ENCODE measurements at regions of chr7 and their contacts with region 1.

Region 1: DNA sequence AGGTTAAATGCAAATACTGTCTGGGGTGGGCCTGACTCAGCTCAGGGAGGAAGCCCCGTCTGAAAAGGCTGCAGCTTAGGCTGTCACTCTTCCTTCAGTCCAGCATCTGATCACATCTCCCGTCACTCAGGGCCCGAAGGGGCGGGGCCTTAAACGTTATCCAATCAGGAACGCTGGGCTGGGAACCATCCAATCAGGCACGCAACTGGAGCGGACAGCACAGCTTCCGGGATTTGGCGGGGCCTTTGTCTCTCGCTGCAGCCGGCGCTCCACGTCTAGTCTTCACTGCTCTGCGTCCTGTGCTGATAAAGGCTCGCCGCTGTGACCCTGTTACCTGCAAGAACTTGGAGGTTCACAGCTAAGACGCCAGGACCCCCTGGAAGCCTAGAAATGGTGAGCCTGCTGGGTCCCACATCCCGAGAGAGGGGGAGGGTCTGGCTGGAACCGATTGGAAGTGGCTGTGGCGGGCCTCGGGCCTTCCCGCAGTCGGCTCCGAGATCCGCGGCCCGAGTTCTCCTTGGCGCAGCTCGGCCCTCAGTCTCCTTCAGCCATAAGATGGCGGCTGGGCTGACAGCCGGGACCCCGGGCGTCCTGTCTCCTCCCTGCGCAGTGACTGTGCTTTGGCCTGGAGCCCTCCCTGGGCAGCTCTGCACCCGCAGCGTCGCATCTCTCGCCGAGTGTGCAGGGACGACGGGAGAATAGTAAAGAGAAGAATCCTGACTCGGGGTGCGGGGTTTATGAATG is at the start of gene ZNF92:
- DNase-seq: peak; percentile 91
- ATAC-seq: peak; percentile 97
- H3K4me3 Mint-ChIP-seq: peak within 1 kb of the TSS; percentile 96
- H3K27ac Mint-ChIP-seq: peak within 1 kb of the TSS; percentile 91
- H3K4me1 Mint-ChIP-seq: peaks cover 49% of the 10 kb centered on the region
- H3K27me3 Mint-ChIP-seq: no peaks in the 10 kb centered on the region
- CTCF ChIP-seq: no peak
- total RNA-seq, gene ZNF92: 24.6 and 27.1 TPM in 2 replicates

Region 2: GRCh38 chr7:64665980-64666662 is 707.7 kb before region 1 on chr7 and contains the start of gene ZNF107:
- CTCF ChIA-PET with region 1: no interaction called
- POLR2A ChIA-PET with region 1: no interaction called
- intact Hi-C with region 1: loop called (anchors 1 kb)
- DNase-seq: peak; percentile 69
- ATAC-seq: peak; percentile 93
- H3K4me3 Mint-ChIP-seq: peak within 1 kb of the TSS; percentile 98
- H3K27ac Mint-ChIP-seq: peak within 1 kb of the TSS; percentile 96
- H3K4me1 Mint-ChIP-seq: peaks cover 56% of the 10 kb centered on the region
- H3K27me3 Mint-ChIP-seq: no peaks in the 10 kb centered on the region
- CTCF ChIP-seq: no peak
- total RNA-seq, gene ZNF107: 40.3 and 50.5 TPM in 2 replicates

Region 3: GRCh38 chr7:65006094-65006992 is 367.4 kb before region 1 on chr7 and contains the start of gene ERV3-1:
- CTCF ChIA-PET with region 1: no interaction called
- POLR2A ChIA-PET with region 1: interaction called, 12 read pairs
- intact Hi-C with region 1: loop called (anchors 2 kb)
- DNase-seq: peak; percentile 77
- ATAC-seq: peak; percentile 99
- H3K4me3 Mint-ChIP-seq: peak within 1 kb of the TSS; percentile 98
- H3K27ac Mint-ChIP-seq: peak within 1 kb of the TSS; percentile 95
- H3K4me1 Mint-ChIP-seq: peaks cover 46% of the 10 kb centered on the region
- H3K27me3 Mint-ChIP-seq: no peaks in the 10 kb centered on the region
- CTCF ChIP-seq: no peak
- total RNA-seq, gene ERV3-1: 23.2 and 24.8 TPM in 2 replicates

Region 4: DNA sequence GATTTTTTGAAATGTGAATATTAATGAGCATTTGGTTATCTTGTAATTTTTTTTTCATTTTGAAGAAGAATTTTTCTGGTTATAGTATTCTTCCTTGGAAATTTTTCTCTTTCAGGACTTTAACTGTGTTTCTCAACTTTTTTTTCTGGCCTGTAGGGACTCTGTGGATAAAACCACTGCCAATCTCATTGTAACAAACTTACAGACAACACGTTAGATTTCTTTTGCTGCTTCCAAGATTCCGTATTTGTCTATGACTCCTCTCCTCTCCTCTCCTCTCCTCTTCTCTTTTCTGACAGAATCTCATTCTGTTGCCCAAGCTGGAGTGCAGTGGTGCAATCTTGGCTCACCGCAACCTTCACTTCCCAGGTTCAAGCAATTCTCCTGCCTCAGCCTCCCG is 19.5 kb before region 1 on chr7:
- CTCF ChIA-PET with region 1: no interaction called
- POLR2A ChIA-PET with region 1: no interaction called
- intact Hi-C with region 1: no loop called
- DNase-seq: no peak
- ATAC-seq: no peak
- H3K4me3 Mint-ChIP-seq: no peak overlapping the region
- H3K27ac Mint-ChIP-seq: no peak overlapping the region
- H3K4me1 Mint-ChIP-seq: no peaks in the 10 kb centered on the region
- H3K27me3 Mint-ChIP-seq: no peaks in the 10 kb centered on the region
- CTCF ChIP-seq: no peak

Region 5: GRCh38 chr7:65475734-65476319 is 102.0 kb after region 1 on chr7:
- CTCF ChIA-PET with region 1: no interaction called
- POLR2A ChIA-PET with region 1: interaction called, 11 read pairs
- intact Hi-C with region 1: no loop called
- DNase-seq: peak; percentile 19
- ATAC-seq: peak; percentile 89
- H3K4me3 Mint-ChIP-seq: peak overlapping the region; percentile 67
- H3K27ac Mint-ChIP-seq: peak overlapping the region; percentile 87
- H3K4me1 Mint-ChIP-seq: peaks cover 81% of the 10 kb centered on the region
- H3K27me3 Mint-ChIP-seq: no peaks in the 10 kb centered on the region
- CTCF ChIP-seq: no peak

Region 6: DNA sequence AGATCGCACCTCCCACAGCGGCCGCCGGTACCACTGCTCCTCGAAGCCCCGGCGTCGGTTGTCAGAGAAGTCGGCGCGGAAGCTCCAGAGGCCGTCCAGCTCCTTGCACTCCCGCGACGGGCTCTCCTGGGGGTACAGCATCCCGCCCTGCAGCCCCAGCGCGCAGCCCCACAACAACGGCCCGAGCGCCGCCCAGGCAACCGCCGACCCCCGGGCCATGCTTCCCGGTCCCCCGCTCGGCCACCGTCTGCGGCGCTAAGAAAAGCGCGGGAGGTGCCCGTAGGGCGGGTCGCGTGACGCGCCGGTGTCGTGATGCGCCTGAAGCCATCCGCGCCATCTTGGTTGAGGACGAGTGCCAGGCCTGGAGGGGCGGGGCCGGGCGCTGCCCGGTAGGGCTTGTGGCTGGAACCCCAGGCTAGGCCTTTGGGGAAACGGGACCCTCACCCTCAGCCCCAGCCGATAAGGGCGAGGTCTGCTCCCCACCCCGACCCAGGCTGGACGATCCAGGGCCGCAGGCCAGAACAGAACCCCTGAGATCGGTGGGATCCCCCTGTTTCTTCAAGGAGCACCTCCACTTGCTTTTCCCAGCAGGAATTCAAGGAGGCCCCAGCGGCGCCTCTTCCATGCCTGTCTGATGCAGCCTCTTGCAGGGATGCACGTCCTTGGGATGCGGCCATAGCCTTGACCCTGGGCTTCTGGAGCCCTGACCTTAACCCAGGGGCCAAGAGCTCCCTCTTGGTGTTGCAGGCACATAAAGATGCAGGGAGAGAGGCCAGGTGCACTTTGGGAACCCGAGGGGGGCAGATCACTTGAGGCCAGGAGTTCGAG is 608.4 kb after region 1 on chr7 and contains the start of gene GUSB:
- CTCF ChIA-PET with region 1: no interaction called
- POLR2A ChIA-PET with region 1: no interaction called
- intact Hi-C with region 1: loop called (anchors 10 kb)
- DNase-seq: peak; percentile 85
- ATAC-seq: peak; percentile 94
- H3K4me3 Mint-ChIP-seq: peak within 1 kb of the TSS; percentile 79
- H3K27ac Mint-ChIP-seq: peak within 1 kb of the TSS; percentile 46
- H3K4me1 Mint-ChIP-seq: peaks cover 19% of the 10 kb centered on the region
- H3K27me3 Mint-ChIP-seq: no peaks in the 10 kb centered on the region
- CTCF ChIP-seq: no peak
- total RNA-seq, gene GUSB: 33.6 and 40.8 TPM in 2 replicates